K562 (cell line): ENCODE measurements at regions of chr6 and their contacts with region 1.

Region 1: DNA sequence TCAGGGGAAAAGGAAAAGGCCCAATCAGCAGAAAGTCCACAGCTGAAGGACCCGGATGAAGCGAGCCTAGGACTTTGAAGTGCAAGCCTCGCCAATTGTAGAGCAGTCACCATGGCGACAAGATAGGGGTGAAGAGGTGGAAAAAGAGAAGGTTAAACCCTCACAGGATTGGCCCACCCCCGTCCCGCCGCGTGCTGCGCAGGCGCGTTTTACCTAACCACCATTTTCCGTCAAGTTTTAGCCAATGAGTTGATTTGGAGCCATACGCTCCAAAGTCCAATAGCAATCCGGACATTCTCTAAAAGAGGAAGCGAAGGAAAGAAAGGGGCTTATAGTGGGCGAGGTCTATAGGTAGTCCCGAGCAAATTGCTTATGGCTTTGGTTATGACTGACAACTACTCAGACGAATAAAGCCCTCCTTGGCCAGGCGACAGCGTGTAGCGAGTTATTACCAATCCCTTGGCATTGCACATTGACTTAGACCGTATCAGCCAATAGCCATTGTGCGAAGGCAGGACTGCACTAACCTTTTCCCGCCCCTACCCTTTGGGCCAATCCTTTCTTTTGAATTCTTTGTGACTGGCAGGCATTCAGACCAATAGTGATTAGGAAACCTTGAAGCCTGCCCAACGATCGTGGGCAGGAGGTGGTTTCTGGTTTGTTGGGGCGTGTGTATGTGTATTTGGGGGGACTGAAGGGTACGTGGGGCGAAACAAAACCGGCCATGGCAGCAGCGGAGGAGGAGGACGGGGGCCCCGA is at the start of gene RNF5:
- DNase-seq: peak; percentile 95 to 100 (median 97)
- ATAC-seq: peak; percentile 85
- H3K4me3 ChIP-seq: peak within 1 kb of the TSS; percentile 88
- H3K27ac ChIP-seq: peak within 1 kb of the TSS; percentile 94
- H3K4me1 ChIP-seq: peaks cover 40 to 65% of the 10 kb centered on the region in 2 experiments
- H3K27me3 ChIP-seq: no peaks in the 10 kb centered on the region
- CTCF ChIP-seq: no peak
- EP300 ChIP-seq: no peak; the same call in 1 of the 2 replicates
- POLR2A ChIP-seq: peak; percentile 77
- RAD21 ChIP-seq: no peak
- polyA plus RNA-seq, gene RNF5: 62.2 to 95.5 TPM

Region 2: GRCh38 chr6:31697555-31697954 is 480.4 kb before region 1 on chr6:
- CTCF ChIA-PET with region 1: no interaction called
- POLR2A ChIA-PET with region 1: no interaction called
- in situ Hi-C with region 1: no loop called
- intact Hi-C with region 1: no loop called
- DNase-seq: no peak
- ATAC-seq: no peak
- H3K4me3 ChIP-seq: no peak overlapping the region
- H3K27ac ChIP-seq: peak overlapping the region; percentile 12; the same call in 1 of the 3 replicates
- H3K4me1 ChIP-seq: peaks cover 16 to 17% of the 10 kb centered on the region in 2 experiments
- H3K27me3 ChIP-seq: no peaks in the 10 kb centered on the region
- CTCF ChIP-seq: no peak
- EP300 ChIP-seq: no peak
- POLR2A ChIP-seq: no peak
- RAD21 ChIP-seq: no peak

Region 3: DNA sequence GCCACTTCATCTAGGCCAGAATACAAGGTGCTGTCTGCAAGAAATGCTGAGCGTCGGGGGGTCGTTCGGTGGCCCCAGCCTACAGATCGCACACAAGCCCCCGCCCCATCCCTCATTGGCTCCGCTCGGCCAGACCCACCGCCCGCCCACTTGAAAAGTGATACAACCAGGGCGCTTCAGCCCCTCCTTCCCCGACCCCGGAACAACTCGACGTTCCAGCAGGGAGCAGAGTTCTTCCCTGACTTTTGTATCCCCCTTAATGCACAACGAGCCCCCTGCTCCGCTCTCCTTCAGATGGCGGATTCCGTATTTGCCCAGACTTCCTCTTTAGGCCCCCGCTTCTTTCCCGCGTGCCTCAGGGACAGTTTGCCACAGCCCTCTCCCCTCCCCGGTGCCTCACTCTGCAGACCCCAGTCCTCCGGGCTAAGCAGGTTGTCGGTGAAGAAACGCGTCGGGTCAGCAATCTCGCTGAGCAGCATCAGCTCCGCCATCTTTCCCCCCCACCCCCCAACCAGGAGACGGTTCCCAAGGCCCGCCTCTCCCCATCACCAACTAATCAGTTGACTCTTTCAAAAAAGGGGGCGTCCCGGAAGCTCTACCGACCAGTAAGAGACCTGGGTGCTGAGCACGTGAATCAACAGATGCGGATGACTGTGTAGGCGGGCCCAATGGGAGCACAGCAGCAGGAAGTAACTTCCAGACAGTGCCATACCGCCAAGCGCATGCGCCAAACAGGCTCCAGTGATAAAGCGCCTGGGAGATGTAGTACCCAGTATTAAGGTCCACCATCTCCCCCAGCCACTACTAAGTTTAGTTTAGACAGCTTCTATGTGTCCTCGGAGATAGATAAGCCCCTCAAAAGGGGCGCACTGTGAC is 50.0 kb before region 1 on chr6 and contains the start of gene ATF6B:
- CTCF ChIA-PET with region 1: no interaction called
- POLR2A ChIA-PET with region 1: interaction called, 20 read pairs
- in situ Hi-C with region 1: no loop called
- intact Hi-C with region 1: loop called (anchors 2 kb)
- DNase-seq: peak; percentile 97 to 100 (median 98)
- ATAC-seq: peak; percentile 88
- H3K4me3 ChIP-seq: peak within 1 kb of the TSS; percentile 91
- H3K27ac ChIP-seq: peak within 1 kb of the TSS; percentile 86
- H3K4me1 ChIP-seq: peaks cover 31 to 32% of the 10 kb centered on the region in 2 experiments
- H3K27me3 ChIP-seq: no peaks in the 10 kb centered on the region
- CTCF ChIP-seq: no peak
- EP300 ChIP-seq: peak; percentile 53; the same call in 1 of the 2 replicates
- POLR2A ChIP-seq: peak; percentile 85
- RAD21 ChIP-seq: no peak
- polyA plus RNA-seq, gene ATF6B: 20.7 to 26.1 TPM

Region 4: GRCh38 chr6:32166411-32167061 is 11.4 kb before region 1 on chr6:
- CTCF ChIA-PET with region 1: no interaction called
- POLR2A ChIA-PET with region 1: interaction called, 30 read pairs
- in situ Hi-C with region 1: no loop called
- intact Hi-C with region 1: no loop called
- DNase-seq: peak; percentile 69 to 77 (median 70)
- ATAC-seq: peak; percentile 62
- H3K4me3 ChIP-seq: no peak overlapping the region
- H3K27ac ChIP-seq: 0 out of 3 replicates have a peak overlapping the region, but pooled peaks have one; percentile 10
- H3K4me1 ChIP-seq: peaks cover 44 to 51% of the 10 kb centered on the region in 2 experiments
- H3K27me3 ChIP-seq: no peaks in the 10 kb centered on the region
- CTCF ChIP-seq: peak; percentile 40 to 59 (median 58)
- EP300 ChIP-seq: no peak
- POLR2A ChIP-seq: no peak; the same call in 1 of the 2 replicates
- RAD21 ChIP-seq: peak in 1 of 2 experiments; percentile 35; a peak in 3 of 4 replicates

Region 5: DNA sequence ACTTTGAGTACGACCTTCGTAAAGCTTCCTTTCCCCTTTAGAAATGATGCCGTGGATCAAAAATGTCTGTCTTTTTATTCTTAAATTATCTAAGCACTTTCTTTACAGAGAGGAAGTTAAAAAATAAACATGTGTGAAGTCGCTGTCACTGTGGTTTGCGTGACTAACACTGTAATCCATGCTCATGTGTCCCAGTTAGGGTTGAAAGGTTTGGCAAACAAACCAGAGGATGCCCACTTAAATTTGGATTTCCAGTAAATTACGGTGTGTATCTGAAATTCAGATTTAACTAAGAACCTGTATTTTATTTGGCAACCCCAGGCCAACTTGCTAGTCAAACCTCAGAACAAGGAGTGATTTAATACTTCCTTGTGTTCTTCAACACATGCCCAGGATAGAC is 390.6 kb after region 1 on chr6:
- CTCF ChIA-PET with region 1: no interaction called
- POLR2A ChIA-PET with region 1: no interaction called
- in situ Hi-C with region 1: no loop called
- intact Hi-C with region 1: no loop called
- DNase-seq: no peak
- ATAC-seq: no peak
- H3K4me3 ChIP-seq: no peak overlapping the region
- H3K27ac ChIP-seq: no peak overlapping the region
- H3K4me1 ChIP-seq: no peaks in the 10 kb centered on the region
- H3K27me3 ChIP-seq: no peaks in the 10 kb centered on the region
- CTCF ChIP-seq: no peak
- EP300 ChIP-seq: no peak
- POLR2A ChIP-seq: no peak
- RAD21 ChIP-seq: no peak